ENCODE measurements at regions of chr1 and their contacts with region 1.

Region 1: DNA sequence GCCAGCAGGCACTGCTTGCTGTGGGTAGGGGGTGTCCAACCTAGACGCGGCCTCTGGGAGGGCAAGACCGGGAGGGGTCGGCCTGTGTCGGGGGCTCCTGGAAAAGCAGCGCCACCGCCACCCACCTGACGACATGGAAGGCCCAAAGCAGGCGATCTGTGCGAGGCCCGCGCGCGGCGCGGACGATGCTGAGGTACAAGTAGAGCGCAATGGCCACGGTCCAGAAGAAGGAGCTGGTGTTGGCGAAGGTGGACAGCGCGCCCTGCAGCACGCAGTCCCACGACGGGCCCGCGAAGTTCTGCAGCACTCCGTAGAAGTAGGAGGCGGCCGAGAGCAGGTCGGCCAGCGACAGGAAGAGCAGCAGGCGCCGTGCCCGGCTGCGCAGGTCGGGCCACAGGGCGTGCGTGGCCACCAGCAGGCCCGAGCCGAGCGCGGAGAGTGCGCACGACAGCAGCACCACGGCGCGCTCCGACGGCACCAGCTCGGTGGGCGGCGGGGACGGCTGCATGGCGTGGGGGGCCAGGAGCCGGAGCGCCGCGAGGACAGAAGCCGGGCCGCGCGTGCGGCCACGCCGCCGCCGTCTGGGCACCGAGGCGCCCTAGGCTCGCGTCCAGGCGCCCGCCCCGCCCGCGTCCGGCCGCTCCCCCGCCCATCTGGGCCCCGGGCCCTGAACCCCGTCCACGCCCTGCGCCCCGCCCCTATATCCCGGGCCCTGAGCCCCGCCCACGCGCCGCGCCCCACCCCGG is at the start of gene GPR157:
- DNase-seq: peak; percentile 65 to 93 (median 81)
- ATAC-seq: peak; percentile 86
- H3K4me3 ChIP-seq: peak within 1 kb of the TSS; percentile 70
- H3K4me3 Mint-ChIP-seq: peak within 1 kb of the TSS; percentile 91
- H3K27ac ChIP-seq: peak within 1 kb of the TSS; percentile 56
- H3K27ac Mint-ChIP-seq: peak within 1 kb of the TSS; percentile 70
- H3K4me1 ChIP-seq: peaks cover 25% of the 10 kb centered on the region
- H3K4me1 Mint-ChIP-seq: peaks cover 40% of the 10 kb centered on the region
- H3K27me3 ChIP-seq: no peaks in the 10 kb centered on the region
- H3K27me3 Mint-ChIP-seq: no peaks in the 10 kb centered on the region
- CTCF ChIP-seq: no peak
- total RNA-seq, gene GPR157: 2.1 to 5.1 TPM

Region 2: GRCh38 chr1:9145021-9145668 is 16.5 kb after region 1 on chr1:
- CTCF ChIA-PET with region 1: interaction called, 10 read pairs
- POLR2A ChIA-PET with region 1: interaction called, 5 read pairs
- intact Hi-C with region 1: no loop called
- DNase-seq: peak in 2 of 14 experiments; percentile 12 to 27
- ATAC-seq: no peak
- H3K4me3 ChIP-seq: no peak overlapping the region
- H3K4me3 Mint-ChIP-seq: no peak overlapping the region
- H3K27ac ChIP-seq: no peak overlapping the region
- H3K27ac Mint-ChIP-seq: no peak overlapping the region
- H3K4me1 ChIP-seq: peaks cover 4% of the 10 kb centered on the region
- H3K4me1 Mint-ChIP-seq: peaks cover 4% of the 10 kb centered on the region
- H3K27me3 ChIP-seq: no peaks in the 10 kb centered on the region
- H3K27me3 Mint-ChIP-seq: no peaks in the 10 kb centered on the region
- CTCF ChIP-seq: no peak

Region 3: GRCh38 chr1:9428601-9429341 is 300.1 kb after region 1 on chr1:
- CTCF ChIA-PET with region 1: no interaction called
- POLR2A ChIA-PET with region 1: no interaction called
- intact Hi-C with region 1: loop called in 1 of 2 experiments (anchors 5 kb)
- DNase-seq: peak; percentile 99 to 100 (median 100)
- ATAC-seq: peak; percentile 72
- H3K4me3 ChIP-seq: peak overlapping the region; percentile 66
- H3K4me3 Mint-ChIP-seq: peak overlapping the region; percentile 91
- H3K27ac ChIP-seq: peak overlapping the region; percentile 72 to 82
- H3K27ac Mint-ChIP-seq: peak overlapping the region; percentile 92
- H3K4me1 ChIP-seq: peaks cover 55% of the 10 kb centered on the region
- H3K4me1 Mint-ChIP-seq: peaks cover 56% of the 10 kb centered on the region
- H3K27me3 ChIP-seq: no peaks in the 10 kb centered on the region
- H3K27me3 Mint-ChIP-seq: no peaks in the 10 kb centered on the region
- CTCF ChIP-seq: no peak

Region 4: GRCh38 chr1:9910425-9911178 is 781.9 kb after region 1 on chr1:
- CTCF ChIA-PET with region 1: no interaction called
- POLR2A ChIA-PET with region 1: no interaction called
- intact Hi-C with region 1: loop called in 1 of 2 experiments (anchors 10 kb)
- DNase-seq: peak; percentile 100
- ATAC-seq: peak; percentile 90
- H3K4me3 ChIP-seq: peak overlapping the region; percentile 84
- H3K4me3 Mint-ChIP-seq: peak overlapping the region; percentile 96
- H3K27ac ChIP-seq: peak overlapping the region; percentile 65 to 70
- H3K27ac Mint-ChIP-seq: peak overlapping the region; percentile 94
- H3K4me1 ChIP-seq: peaks cover 23% of the 10 kb centered on the region
- H3K4me1 Mint-ChIP-seq: peaks cover 36% of the 10 kb centered on the region
- H3K27me3 ChIP-seq: no peaks in the 10 kb centered on the region
- H3K27me3 Mint-ChIP-seq: no peaks in the 10 kb centered on the region
- CTCF ChIP-seq: no peak

Measured in CD4-positive, alpha-beta T cell (primary cell).